Activated CD8-positive, alpha-beta memory T cell treated with anti-CD3 and anti-CD28 coated beads, Interleukin-2, amount 10 ng/mL, durations not matched to agents 7 days and 5 days (primary cell): ENCODE measurements at regions of chr2 and their contacts with region 1.

Region 1: DNA sequence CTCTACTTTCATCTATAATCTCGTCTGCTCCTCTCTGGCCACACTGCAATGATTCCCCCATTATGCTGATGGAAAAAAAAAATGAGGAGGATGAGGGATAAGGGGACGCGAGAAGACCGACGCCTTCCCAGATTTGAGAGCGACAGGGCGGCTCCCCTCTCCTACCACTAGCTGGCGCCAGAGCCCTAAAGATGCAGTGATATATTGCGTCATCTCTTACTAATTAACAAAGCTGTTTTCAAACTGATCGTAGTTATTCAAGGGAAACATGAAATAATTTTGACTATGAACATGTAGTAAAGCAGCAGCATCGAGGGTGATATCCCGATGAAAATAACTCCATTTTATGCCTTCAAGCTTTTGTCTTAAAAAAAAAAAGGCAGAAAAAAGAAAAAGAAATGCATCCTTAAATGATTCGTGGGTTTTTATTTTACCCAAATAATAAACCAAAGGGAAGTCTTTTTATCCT is 48.0 kb upstream of the HNRNPA3 start:
- DNase-seq: peak; percentile 86
- ATAC-seq: peak; percentile 78
- H3K4me3 Mint-ChIP-seq: no peak overlapping the region
- H3K27ac Mint-ChIP-seq: no peak overlapping the region
- H3K4me1 Mint-ChIP-seq: peaks cover 37% of the 10 kb centered on the region
- H3K27me3 Mint-ChIP-seq: peaks cover 4% of the 10 kb centered on the region

Region 2: GRCh38 chr2:177138823-177139222 is 25.8 kb before region 1 on chr2:
- CTCF ChIA-PET with region 1: no interaction called
- DNase-seq: no peak
- ATAC-seq: no peak
- H3K4me3 Mint-ChIP-seq: no peak overlapping the region
- H3K27ac Mint-ChIP-seq: no peak overlapping the region
- H3K4me1 Mint-ChIP-seq: peaks cover 5% of the 10 kb centered on the region
- H3K27me3 Mint-ChIP-seq: peaks cover 23% of the 10 kb centered on the region

Region 3: GRCh38 chr2:177212891-177213856 is 48.6 kb after region 1 on chr2:
- CTCF ChIA-PET with region 1: interaction called, 18 read pairs
- DNase-seq: peak; percentile 95
- ATAC-seq: peak; percentile 66
- H3K4me3 Mint-ChIP-seq: peak overlapping the region; percentile 93
- H3K27ac Mint-ChIP-seq: peak overlapping the region; percentile 99
- H3K4me1 Mint-ChIP-seq: peaks cover 41% of the 10 kb centered on the region
- H3K27me3 Mint-ChIP-seq: no peaks in the 10 kb centered on the region

Region 4: GRCh38 chr2:177254433-177255226 is 90.0 kb after region 1 on chr2:
- CTCF ChIA-PET with region 1: interaction called, 11 read pairs
- DNase-seq: no peak
- ATAC-seq: no peak
- H3K4me3 Mint-ChIP-seq: no peak overlapping the region
- H3K27ac Mint-ChIP-seq: no peak overlapping the region
- H3K4me1 Mint-ChIP-seq: peaks cover 86% of the 10 kb centered on the region
- H3K27me3 Mint-ChIP-seq: no peaks in the 10 kb centered on the region

Region 5: DNA sequence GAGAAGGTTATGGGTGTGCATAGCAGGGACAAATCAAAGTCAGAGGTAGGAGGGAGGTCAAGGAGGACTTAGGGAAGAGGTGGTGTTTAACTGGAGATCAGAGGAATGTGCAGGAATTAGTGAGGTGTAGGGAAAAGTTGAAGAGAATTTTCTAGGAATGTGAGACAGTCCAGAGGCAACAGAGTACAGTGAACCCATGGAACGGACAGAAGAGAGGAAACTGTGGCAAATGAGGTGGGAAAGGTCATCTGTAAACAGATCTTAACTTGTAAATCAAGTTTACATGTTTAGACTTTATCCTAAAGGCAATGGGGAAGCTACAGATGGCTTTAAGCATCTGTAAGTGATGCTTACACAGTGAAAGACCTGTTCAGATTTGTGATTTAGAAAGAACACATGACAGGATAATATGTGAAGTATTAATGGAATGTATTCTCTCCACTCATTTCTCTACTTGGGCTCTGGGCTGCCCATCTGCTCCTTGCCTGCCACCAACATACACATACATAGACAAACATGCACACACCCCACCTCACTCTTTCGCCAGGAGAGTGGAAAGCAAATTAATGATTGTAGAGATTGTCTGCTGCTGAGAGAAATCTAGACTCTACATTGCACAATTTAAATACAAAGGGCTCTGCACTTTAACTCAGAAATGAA is 160.8 kb after region 1 on chr2:
- CTCF ChIA-PET with region 1: interaction called, 53 read pairs
- DNase-seq: no peak
- ATAC-seq: no peak
- H3K4me3 Mint-ChIP-seq: no peak overlapping the region
- H3K27ac Mint-ChIP-seq: no peak overlapping the region
- H3K4me1 Mint-ChIP-seq: no peaks in the 10 kb centered on the region
- H3K27me3 Mint-ChIP-seq: no peaks in the 10 kb centered on the region

Region 6: GRCh38 chr2:177419274-177419673 is 254.7 kb after region 1 on chr2:
- CTCF ChIA-PET with region 1: interaction called, 15 read pairs
- DNase-seq: no peak
- ATAC-seq: no peak
- H3K4me3 Mint-ChIP-seq: no peak overlapping the region
- H3K27ac Mint-ChIP-seq: no peak overlapping the region
- H3K4me1 Mint-ChIP-seq: peaks cover 21% of the 10 kb centered on the region
- H3K27me3 Mint-ChIP-seq: no peaks in the 10 kb centered on the region

Region 7: DNA sequence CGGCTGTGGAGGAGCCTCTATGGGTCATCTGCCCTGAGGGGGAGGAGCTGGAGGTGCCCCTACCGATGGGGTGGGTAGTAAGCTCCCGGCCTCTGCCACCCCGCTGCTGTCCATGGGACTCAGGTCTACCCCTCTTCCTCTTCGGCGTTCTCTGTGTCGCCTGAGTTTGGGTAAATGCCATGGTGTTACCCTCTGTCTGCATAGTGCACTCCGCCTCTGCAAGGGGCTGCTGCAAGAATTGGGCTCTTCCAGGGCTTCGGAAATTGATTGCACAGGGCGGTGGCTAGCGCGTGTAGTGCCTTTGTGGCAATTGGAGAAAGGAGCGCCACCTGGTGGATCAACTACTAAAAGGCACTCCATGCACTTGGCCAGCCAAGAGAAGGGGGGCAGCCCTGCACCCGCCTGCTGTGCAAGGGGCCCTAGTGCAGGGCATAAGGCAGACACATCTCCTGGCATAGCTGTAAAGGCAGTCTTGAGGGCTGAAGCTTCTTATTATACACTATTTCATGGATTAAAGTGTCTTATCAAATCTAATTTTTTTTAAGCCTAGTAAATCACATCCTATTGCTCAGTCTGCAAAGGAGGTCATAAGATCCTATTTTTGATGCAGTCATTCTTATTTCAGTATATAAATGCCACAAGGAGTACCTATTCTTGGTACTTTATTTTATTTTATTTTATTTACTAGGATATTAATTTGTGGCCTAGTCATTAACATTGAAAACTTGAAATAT is 599.1 kb after region 1 on chr2:
- CTCF ChIA-PET with region 1: interaction called, 16 read pairs
- DNase-seq: peak; percentile 86
- ATAC-seq: peak; percentile 97
- H3K4me3 Mint-ChIP-seq: no peak overlapping the region
- H3K27ac Mint-ChIP-seq: no peak overlapping the region
- H3K4me1 Mint-ChIP-seq: peaks cover 3% of the 10 kb centered on the region
- H3K27me3 Mint-ChIP-seq: peaks cover 32% of the 10 kb centered on the region